AG04450 (cell line): ENCODE measurements at regions of chr17 and their contacts with region 1.

Region 1: GRCh38 chr17:7219812-7220581 is at the starts of genes ACADVL and DLG4:
- DNase-seq: peak; percentile 74
- H3K4me3 ChIP-seq: peak within 1 kb of the TSS; percentile 86
- H3K27ac ChIP-seq: peak within 1 kb of the TSS; percentile 87
- H3K27me3 ChIP-seq: no peaks in the 10 kb centered on the region
- CTCF ChIP-seq: no peak
- polyA plus RNA-seq, gene ACADVL: 217 and 262 TPM in 2 replicates
- polyA plus RNA-seq, gene DLG4: 10.2 and 11.6 TPM in 2 replicates

Region 2: GRCh38 chr17:7234083-7234951 is 14.3 kb after region 1 on chr17 and contains the start of gene DVL2:
- CTCF ChIA-PET with region 1: interaction called, 4 read pairs
- POLR2A ChIA-PET with region 1: interaction called, 42 read pairs
- DNase-seq: peak; percentile 87
- H3K4me3 ChIP-seq: peak within 1 kb of the TSS; percentile 88
- H3K27ac ChIP-seq: peak within 1 kb of the TSS; percentile 73
- H3K27me3 ChIP-seq: no peaks in the 10 kb centered on the region
- CTCF ChIP-seq: no peak
- polyA plus RNA-seq, gene DVL2: 5.1 and 8.2 TPM in 2 replicates

Region 3: DNA sequence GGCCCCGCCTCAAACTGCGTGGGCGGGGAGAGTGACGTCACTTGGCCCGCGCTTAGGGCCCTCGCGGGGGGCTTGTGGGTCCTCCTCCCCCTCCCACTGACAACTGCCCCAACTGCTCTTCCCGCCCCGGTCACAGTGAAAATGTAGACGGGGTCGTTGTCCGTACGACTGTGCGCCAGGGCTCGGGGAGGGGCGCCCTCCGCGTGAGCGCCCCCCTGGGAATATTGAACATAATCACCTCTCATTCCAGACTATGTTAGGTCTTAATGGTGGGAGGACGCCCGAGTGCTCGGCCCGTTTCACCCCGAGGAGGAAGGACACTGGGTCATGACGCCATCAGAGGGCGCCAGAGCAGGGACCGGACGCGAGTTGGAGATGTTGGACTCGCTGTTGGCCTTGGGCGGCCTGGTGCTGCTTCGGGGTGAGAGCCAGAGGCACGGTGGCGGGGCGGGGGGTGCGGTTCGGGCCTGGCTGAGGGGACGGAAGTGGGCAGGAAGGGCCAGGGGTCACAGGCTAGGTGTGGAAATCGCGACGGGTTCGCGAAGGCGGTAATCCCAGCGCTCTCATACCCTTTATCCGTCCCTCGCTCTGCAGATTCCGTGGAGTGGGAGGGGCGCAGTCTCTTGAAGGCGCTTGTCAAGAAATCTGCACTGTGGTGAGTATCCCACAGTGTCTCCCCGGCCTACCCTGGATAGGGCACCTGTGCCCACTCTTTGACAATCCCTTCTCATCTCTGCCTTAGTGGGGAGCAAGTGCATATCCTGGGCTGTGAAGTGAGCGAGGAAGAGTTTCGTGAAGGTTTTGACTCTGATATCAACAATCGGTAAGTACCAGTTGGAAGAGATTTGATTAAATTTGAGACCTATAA is 32.4 kb after region 1 on chr17 and contains the start of gene ELP5:
- CTCF ChIA-PET with region 1: interaction called, 3 read pairs
- POLR2A ChIA-PET with region 1: interaction called, 10 read pairs
- DNase-seq: peak; percentile 81
- H3K4me3 ChIP-seq: peak within 1 kb of the TSS; percentile 93
- H3K27ac ChIP-seq: peak within 1 kb of the TSS; percentile 100
- H3K27me3 ChIP-seq: no peaks in the 10 kb centered on the region
- CTCF ChIP-seq: no peak
- polyA plus RNA-seq, gene ELP5: 25.9 and 28.0 TPM in 2 replicates